Activated CD4-positive, alpha-beta T cell treated with anti-CD3 and anti-CD28 coated beads, Interleukin-2, amount 10 ng/mL, durations not matched to agents 24 days and 14 days (primary cell): ENCODE measurements at regions of chr6 and their contacts with region 1.

Region 1: DNA sequence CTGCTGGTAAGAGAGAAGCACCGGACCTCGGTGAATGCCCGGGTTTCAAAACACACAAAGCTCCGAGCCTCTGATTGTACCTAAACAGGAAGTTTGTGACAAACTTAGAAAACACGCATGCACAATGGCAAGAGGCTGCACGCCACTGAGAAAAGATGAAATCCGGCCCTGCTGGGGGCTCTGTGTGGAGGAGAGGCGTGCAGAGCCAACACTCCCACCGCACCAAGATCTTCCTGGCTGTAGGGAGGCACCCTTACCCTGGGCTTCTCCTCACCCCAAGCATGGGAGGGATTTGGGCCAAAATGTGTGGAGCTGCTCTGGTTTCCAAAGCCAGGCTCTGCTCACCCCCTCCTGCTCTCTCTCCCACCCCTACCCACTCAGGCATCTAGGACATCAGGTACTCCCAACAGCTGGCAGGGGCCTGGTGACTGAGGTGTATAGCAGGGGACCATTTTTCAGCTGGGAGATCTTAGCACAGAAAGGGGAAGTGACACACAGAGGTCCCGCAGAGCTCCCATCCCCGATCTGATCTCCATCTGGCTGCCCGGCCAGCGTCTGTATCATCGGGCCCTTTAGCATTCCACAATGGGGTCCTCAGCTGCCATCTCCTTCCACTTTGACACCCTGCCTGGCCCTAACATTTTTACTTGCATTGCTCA is 84.2 kb downstream of the TRERF1 start:
- DNase-seq: peak; percentile 82
- H3K4me3 Mint-ChIP-seq: peak overlapping the region; percentile 72
- H3K27ac Mint-ChIP-seq: peak overlapping the region; percentile 89
- H3K4me1 Mint-ChIP-seq: peaks cover 71% of the 10 kb centered on the region
- H3K27me3 Mint-ChIP-seq: no peaks in the 10 kb centered on the region

Region 2: DNA sequence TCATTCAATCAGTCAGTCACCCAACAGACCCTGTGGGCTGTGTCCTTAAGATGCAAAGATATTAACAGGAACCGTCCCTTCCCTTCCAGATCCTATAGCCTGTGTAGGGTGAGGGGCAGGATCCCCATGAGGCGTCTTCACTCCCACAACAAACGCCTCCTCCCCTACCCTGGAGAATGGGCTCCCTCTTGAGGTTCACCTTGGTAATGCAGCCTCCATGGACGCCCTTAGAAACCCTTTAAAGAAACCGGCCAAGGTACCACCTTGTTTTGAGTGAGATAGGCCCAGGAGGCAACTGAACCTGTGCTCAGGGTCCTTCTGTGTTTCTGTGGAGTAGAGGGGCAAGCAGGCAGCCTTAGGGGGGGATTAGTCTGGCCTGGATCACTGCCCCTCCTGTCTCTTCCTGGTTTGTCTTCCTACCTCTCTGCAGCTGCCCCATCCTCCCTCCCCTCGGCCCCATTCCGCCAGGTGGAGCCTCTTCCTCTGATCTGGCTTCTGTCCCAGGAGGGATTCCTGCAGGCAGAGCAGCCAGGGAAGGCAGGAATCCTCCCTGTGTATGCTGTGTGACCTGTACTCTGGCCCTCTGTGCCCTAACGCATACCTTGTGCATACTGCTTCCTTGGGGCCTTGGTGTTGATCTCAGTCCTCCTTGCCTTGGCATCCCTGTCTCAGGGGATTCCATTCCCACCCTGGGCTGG is 200.9 kb before region 1 on chr6:
- intact Hi-C with region 1: no loop called
- DNase-seq: peak; percentile 95
- H3K4me3 Mint-ChIP-seq: no peak overlapping the region
- H3K27ac Mint-ChIP-seq: no peak overlapping the region
- H3K4me1 Mint-ChIP-seq: peaks cover 7% of the 10 kb centered on the region
- H3K27me3 Mint-ChIP-seq: peaks cover 7% of the 10 kb centered on the region

Region 3: DNA sequence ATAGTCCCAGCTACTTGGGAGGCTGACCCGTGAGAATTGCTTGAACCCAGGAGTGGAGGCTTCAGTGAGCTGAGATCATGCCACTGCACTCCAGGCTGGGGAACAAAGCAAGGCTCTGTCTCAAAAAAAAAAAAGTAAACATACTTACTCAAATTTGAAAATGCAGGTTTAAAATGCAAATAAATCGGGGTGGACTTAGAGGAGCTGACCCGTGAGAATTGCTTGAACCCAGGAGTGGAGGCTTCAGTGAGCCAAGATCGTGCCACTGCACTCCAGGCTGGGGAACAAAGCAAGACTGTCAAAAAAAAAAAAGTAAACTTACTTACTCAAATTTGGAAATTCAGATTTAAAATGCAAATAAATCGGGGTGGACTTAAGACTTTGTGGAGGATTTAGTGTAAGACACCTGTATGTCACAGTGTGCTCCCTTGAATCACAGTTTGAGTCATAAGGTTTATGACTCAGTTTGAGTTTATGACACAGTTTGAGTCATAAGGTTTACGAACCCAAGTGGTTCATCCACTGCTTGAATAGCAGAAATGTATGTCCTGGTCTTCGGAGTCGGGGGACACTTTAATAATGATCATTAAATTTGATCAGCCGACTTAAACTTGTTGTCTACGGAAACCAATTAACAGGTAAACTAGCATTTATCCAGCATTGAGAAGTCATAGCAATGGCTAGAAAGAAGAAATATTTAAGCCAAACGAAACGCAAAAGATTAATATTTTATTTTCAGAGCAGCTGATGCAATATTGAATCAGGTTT is 143.1 kb before region 1 on chr6:
- intact Hi-C with region 1: loop called (anchors 1 kb)
- DNase-seq: no peak
- H3K4me3 Mint-ChIP-seq: peak overlapping the region; percentile 64
- H3K27ac Mint-ChIP-seq: peak overlapping the region; percentile 81
- H3K4me1 Mint-ChIP-seq: peaks cover 9% of the 10 kb centered on the region
- H3K27me3 Mint-ChIP-seq: no peaks in the 10 kb centered on the region

Region 4: GRCh38 chr6:42339991-42340401 is 27.5 kb before region 1 on chr6:
- intact Hi-C with region 1: loop called (anchors 1 kb)
- DNase-seq: peak; percentile 78
- H3K4me3 Mint-ChIP-seq: peak overlapping the region; percentile 65
- H3K27ac Mint-ChIP-seq: peak overlapping the region; percentile 94
- H3K4me1 Mint-ChIP-seq: peaks cover 75% of the 10 kb centered on the region
- H3K27me3 Mint-ChIP-seq: no peaks in the 10 kb centered on the region

Region 5: DNA sequence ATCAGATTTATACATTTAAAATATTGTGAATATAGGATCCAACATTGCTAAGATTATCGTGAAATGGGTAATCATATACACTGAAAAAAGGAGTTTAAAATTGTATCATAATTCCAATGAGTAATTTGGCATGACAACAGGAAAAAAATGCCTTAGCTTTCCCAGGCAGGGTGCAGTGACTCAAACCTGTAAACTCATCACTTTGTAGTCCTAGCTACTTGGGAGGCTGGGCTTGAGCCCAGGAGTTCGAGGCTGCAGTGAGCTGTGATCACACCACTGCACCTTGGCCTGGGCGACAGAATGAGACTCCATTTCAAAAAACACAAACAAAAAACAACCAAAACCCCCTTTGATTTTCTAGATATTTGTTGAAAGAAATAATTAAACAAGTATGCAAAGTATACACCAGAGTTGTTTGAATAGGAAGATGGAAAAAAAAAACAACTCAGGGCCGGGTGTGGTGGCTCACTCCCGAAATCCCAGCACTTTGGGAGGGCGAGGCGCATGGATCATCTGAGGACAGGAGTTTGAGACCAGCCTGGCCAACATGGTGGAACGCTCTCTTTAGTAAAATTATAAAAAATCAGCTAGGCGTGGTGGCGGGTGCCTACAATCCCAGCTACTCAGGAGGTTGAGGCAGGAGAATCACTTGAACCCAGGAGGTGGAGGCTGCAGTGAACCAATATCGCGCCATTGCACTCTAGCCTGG is 14.5 kb before region 1 on chr6:
- intact Hi-C with region 1: loop called (anchors 1 kb)
- DNase-seq: no peak
- H3K4me3 Mint-ChIP-seq: no peak overlapping the region
- H3K27ac Mint-ChIP-seq: no peak overlapping the region
- H3K4me1 Mint-ChIP-seq: peaks cover 15% of the 10 kb centered on the region
- H3K27me3 Mint-ChIP-seq: no peaks in the 10 kb centered on the region

Region 6: GRCh38 chr6:42378125-42378524 is 10.6 kb after region 1 on chr6:
- intact Hi-C with region 1: loop called (anchors 1 kb)
- DNase-seq: peak; percentile 84
- H3K4me3 Mint-ChIP-seq: peak overlapping the region; percentile 64
- H3K27ac Mint-ChIP-seq: peak overlapping the region; percentile 82
- H3K4me1 Mint-ChIP-seq: peaks cover 48% of the 10 kb centered on the region
- H3K27me3 Mint-ChIP-seq: no peaks in the 10 kb centered on the region

Region 7: DNA sequence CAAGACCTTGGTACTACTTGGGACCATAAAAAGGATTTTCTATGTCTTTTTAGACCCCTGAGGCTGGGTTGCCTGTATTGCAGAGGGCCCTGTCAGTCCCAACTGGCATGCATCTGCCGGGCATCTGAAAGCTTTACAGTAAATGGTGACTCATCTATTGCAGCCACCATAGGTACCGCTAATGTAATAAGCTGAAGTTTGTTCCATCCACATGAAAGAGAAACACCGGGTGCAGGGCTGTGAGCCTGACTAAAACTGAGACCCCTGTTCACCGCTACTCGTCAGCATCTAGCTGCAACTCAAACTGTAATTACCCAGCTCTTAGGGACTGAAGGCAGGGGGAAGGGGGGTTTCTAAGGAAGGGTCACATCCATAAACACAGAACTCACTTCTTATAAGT is 34.7 kb after region 1 on chr6:
- intact Hi-C with region 1: loop called (anchors 1 kb)
- DNase-seq: peak; percentile 84
- H3K4me3 Mint-ChIP-seq: peak overlapping the region; percentile 49
- H3K27ac Mint-ChIP-seq: peak overlapping the region; percentile 84
- H3K4me1 Mint-ChIP-seq: peaks cover 61% of the 10 kb centered on the region
- H3K27me3 Mint-ChIP-seq: no peaks in the 10 kb centered on the region

Region 8: DNA sequence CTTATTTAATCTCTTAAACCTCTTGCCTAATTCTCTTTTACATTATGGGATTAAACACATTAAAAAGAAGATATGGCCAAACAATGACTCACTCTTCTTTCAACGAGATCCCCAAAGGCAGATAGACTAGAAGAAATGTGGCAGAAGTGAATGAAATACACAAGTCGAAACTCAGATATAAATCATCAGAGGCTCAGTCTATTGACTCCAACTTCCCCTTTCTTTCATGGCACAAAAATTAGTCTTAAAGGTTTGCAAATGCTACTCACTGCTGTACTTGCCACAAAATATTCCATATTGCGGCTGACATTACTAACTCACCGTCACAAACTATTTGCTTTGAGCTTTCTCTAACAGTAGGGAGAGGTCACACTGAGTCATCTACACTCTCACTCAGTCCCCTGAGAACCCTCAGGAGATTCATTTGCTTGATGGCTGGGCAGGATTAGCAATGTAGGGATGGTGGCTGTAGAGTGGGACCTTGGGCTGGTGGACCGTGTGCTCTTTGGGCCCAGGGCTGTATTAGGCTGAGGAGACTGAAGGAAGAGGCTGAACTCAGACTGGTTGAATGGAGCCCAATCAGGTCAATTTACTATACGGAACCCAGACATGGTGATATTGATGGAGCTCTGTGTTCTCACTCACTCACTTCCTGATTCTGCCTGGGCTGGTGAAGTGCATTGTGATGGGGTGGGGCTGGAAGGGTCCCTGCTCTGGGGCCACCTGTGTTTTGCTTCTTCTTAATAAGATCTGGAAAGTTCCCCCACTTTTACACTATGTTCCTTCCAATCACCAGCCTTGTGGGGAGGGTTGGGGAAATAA is 153.5 kb after region 1 on chr6:
- intact Hi-C with region 1: loop called (anchors 5 kb)
- DNase-seq: peak; percentile 55
- H3K4me3 Mint-ChIP-seq: no peak overlapping the region
- H3K27ac Mint-ChIP-seq: peak overlapping the region; percentile 89
- H3K4me1 Mint-ChIP-seq: peaks cover 10% of the 10 kb centered on the region
- H3K27me3 Mint-ChIP-seq: peaks cover 4% of the 10 kb centered on the region